ENCODE measurements at regions of chr17 and their contacts with region 1.

Region 1: GRCh38 chr17:64063766-64064224 is 43.4 kb upstream of the ICAM2 start:
- DNase-seq: peak; percentile 64 to 86 (median 85)
- ATAC-seq: peak; percentile 77 to 90
- H3K4me3 ChIP-seq: no peak overlapping the region
- H3K27ac ChIP-seq: no peak overlapping the region
- H3K4me1 ChIP-seq: no peaks in the 10 kb centered on the region
- H3K27me3 ChIP-seq: no peaks in the 10 kb centered on the region

Region 2: GRCh38 chr17:63974594-63975192 is 89.1 kb before region 1 on chr17:
- intact Hi-C with region 1: no loop called
- DNase-seq: peak in 2 of 3 donors; percentile 29 to 43
- ATAC-seq: peak in 1 of 2 donors; percentile 4
- H3K4me3 ChIP-seq: no peak overlapping the region
- H3K27ac ChIP-seq: no peak overlapping the region
- H3K4me1 ChIP-seq: peaks cover 9% of the 10 kb centered on the region
- H3K27me3 ChIP-seq: no peaks in the 10 kb centered on the region

Region 3: DNA sequence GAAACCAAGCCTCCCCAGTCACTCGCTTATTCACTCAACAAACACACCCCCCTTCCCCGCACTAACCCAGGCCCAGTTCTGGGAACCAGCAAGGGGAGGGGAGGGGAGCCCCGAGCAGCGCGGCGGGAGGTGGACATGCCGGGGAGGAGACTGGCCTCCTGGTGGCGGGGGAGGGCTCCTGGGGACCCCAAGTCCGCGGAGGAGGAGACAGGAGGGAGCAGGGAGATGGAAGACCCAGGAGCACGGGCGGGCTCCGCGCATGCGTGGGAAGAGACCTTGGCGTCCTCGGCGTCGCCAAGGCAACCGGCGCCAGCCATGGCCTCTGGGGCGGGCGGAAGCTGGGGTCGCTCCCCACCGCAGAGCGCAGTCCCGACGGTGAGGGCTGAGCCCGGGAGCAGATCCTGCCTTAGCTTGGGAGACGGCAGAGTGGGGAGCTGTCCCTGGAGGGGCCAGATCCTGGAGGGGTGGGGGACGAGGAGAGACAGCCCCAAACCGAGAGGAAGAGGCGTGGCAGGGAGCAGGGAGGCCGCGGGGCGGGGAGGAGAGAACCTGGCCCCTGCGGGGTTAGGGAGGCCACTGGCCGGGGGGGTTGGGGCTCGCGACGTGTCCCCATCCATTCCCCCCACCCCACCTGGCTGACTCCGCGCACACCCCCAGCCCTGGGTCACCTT is 65.6 kb before region 1 on chr17 and contains the start of gene PRR29:
- intact Hi-C with region 1: no loop called
- DNase-seq: peak; percentile 85 to 92 (median 90)
- ATAC-seq: peak; percentile 59 to 62
- H3K4me3 ChIP-seq: peak within 1 kb of the TSS; percentile 46
- H3K27ac ChIP-seq: no peak within 1 kb of the TSS
- H3K4me1 ChIP-seq: peaks cover 5% of the 10 kb centered on the region
- H3K27me3 ChIP-seq: no peaks in the 10 kb centered on the region
- total RNA-seq, gene PRR29: 0.11 to 0.25 (median 0.15) TPM in 3 of 4 donors, not detected in the other

Region 4: DNA sequence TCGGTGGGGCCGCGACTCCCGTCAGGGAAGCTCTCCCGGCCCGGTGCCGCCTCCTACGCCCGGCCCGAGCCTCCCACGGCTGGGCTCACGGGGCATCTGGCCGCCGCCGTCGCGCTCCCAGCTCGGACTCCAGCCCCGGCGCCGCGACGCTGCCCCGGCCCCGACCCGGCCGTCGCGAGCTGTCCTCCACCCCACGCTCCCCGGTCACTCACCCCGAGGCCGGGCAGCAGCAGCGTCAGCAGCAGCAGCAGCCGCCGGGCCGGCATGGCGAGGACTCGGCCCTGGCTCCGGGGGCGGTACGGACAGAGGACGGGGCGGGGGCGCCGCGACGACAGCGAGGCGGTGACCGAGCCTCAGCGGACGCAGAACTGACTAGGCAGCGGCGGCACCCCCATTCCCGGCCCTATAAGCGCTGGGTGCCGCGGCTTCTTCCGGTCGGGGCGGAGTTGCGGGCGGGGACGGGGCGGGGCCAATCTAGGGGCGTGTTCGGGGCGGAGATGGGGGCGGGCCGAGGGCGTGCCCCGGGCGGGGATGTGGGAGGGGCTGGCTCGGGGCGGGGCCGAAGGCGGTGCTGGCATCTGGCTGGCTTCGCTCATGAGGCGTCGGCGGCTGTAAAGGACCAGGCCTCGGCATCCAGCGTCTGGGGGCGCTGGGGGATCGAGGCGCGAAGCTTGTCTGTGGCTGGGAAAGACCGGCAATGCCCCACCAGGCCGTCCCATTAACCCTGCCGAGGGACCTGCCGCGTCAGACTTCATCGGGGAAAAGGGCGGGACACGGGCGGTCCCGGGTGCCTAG is 66.2 kb after region 1 on chr17 and contains the start of gene ERN1:
- intact Hi-C with region 1: loop called in 3 of 4 experiments (anchors 10 kb)
- DNase-seq: peak; percentile 96 to 98 (median 98)
- ATAC-seq: peak; percentile 98
- H3K4me3 ChIP-seq: peak within 1 kb of the TSS; percentile 86
- H3K27ac ChIP-seq: peak within 1 kb of the TSS; percentile 90
- H3K4me1 ChIP-seq: no peaks in the 10 kb centered on the region
- H3K27me3 ChIP-seq: no peaks in the 10 kb centered on the region
- total RNA-seq, gene ERN1: 8.9 to 11.4 (median 10.0) TPM

Measured in right cardiac atrium (tissue), 5 donors.